Sciatic nerve (tissue), 2 donors: ENCODE measurements at regions of chr2 and their contacts with region 1.

Region 1: GRCh38 chr2:14608245-14608644 is 24.3 kb upstream of the LRATD1 start:
- DNase-seq: no peak
- ATAC-seq: no peak

Region 2: GRCh38 chr2:15096873-15097272 is 488.6 kb after region 1 on chr2:
- intact Hi-C with region 1: loop called (anchors 5 kb)
- DNase-seq: no peak
- ATAC-seq: no peak